ENCODE measurements at regions of chr15 and their contacts with region 1.

Region 1: DNA sequence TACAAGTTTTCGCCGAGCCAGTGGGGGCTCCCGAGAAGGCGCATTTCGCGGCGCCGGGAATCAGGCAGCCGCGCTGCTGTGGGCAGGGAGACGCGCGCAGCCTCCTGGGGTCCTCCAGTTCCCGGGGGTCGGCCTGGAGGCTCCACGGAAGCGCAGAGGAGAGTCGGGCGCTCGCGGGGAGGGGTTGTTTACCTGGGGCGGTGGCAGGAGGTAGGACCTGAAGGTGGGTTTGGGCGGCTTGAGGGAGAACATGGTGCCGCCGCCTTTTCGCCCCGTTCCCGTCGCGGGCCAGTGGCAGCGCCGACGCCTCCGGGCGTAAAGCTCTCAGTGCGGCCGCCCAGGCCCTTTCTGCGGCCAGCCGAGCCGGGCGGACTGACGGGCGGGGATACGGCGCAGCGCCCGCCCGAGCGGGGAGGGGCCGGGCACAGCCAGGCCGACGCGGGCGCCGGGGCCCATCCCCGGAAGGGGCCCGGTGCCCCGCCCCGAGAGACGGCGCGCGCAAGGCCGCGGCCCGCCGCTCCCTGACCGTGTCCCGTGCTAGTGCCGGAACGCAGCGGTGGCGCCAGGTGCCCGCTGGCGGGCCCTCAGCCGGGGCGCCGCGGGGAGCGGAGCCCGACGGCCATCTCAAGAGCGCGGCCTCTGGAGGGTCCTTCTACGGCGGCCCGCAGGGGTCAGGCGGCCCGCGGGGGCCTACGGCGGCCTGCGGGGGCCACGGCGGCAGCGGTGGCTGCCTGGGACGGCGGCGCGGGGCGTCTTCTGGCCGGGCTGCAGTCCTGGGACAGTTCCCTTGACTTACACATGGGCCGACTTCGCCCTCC is at the start of gene MTMR10:
- DNase-seq: peak; percentile 58 to 91 (median 73)
- ATAC-seq: peak; percentile 92 to 93
- H3K4me3 Mint-ChIP-seq: peak within 1 kb of the TSS; percentile 93 to 98 (median 96)
- H3K27ac Mint-ChIP-seq: peak within 1 kb of the TSS; percentile 90 to 97 (median 94)
- H3K4me1 Mint-ChIP-seq: peaks cover 13 to 49% (median 35%) of the 10 kb centered on the region in 4 donors
- H3K27me3 Mint-ChIP-seq: no peaks in the 10 kb centered on the region
- polyA plus RNA-seq, gene MTMR10: 3.4 to 9.8 (median 4.6) TPM

Region 2: GRCh38 chr15:31013538-31014228 is 22.2 kb after region 1 on chr15:
- POLR2A ChIA-PET with region 1: interaction called, 45 read pairs
- DNase-seq: peak in 3 of 10 donors; percentile 23 to 53 (median 45)
- ATAC-seq: peak; percentile 90 to 97
- H3K4me3 Mint-ChIP-seq: peak overlapping the region in 9 of 10 donors; percentile 3 to 71 (median 43)
- H3K27ac Mint-ChIP-seq: peak overlapping the region; percentile 74 to 94 (median 91)
- H3K4me1 Mint-ChIP-seq: peaks cover 11 to 30% (median 23%) of the 10 kb centered on the region in 4 donors
- H3K27me3 Mint-ChIP-seq: no peaks in the 10 kb centered on the region